ENCODE measurements at regions of chr2 and their contacts with region 1.

Region 1: GRCh38 chr2:196361606-196362326 is 190.4 kb upstream of the STK17B start:
- DNase-seq: peak; percentile 85
- H3K4me3 ChIP-seq: peak overlapping the region; percentile 34 to 94 (median 57)
- H3K27ac ChIP-seq: peak overlapping the region; percentile 73
- H3K4me1 ChIP-seq: peaks cover 58% of the 10 kb centered on the region
- H3K27me3 ChIP-seq: no peaks in the 10 kb centered on the region
- CTCF ChIP-seq: no peak
- POLR2A ChIP-seq: peak; percentile 80

Region 2: DNA sequence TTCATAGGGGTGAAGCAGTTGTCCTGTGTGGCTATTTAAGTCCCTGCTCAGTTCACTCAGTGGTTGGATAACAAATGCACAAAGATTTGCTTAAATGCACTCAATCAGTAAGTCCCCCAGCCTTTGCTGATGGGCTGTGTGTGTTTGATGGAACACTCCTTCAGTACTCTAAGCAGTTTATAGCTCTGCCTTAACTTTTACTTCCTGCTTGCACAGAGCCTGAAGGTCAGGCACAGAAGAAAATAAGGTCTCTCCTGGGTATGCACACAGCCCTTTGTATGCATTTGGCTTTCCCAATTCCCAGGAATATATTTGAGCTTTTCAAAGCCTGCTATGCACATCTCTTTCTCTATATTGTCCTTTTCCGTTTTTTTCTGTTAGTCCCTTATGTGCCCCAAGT is 18.3 kb after region 1 on chr2:
- CTCF ChIA-PET with region 1: interaction called, 6 read pairs
- POLR2A ChIA-PET with region 1: no interaction called
- dilution Hi-C with region 1: no loop called
- intact Hi-C with region 1: loop called (anchors 2 kb)
- DNase-seq: no peak
- H3K4me3 ChIP-seq: no peak overlapping the region
- H3K27ac ChIP-seq: no peak overlapping the region
- H3K4me1 ChIP-seq: no peaks in the 10 kb centered on the region
- H3K27me3 ChIP-seq: no peaks in the 10 kb centered on the region
- CTCF ChIP-seq: no peak
- POLR2A ChIP-seq: no peak